Astrocyte of the cerebellum (primary cell): ENCODE measurements at regions of chr12 and their contacts with region 1.

Region 1: GRCh38 chr12:76444408-76444984 is 96.3 kb upstream of the BBS10 start:
- DNase-seq: no peak
- H3K4me3 ChIP-seq: no peak overlapping the region
- CTCF ChIP-seq: no peak

Region 2: DNA sequence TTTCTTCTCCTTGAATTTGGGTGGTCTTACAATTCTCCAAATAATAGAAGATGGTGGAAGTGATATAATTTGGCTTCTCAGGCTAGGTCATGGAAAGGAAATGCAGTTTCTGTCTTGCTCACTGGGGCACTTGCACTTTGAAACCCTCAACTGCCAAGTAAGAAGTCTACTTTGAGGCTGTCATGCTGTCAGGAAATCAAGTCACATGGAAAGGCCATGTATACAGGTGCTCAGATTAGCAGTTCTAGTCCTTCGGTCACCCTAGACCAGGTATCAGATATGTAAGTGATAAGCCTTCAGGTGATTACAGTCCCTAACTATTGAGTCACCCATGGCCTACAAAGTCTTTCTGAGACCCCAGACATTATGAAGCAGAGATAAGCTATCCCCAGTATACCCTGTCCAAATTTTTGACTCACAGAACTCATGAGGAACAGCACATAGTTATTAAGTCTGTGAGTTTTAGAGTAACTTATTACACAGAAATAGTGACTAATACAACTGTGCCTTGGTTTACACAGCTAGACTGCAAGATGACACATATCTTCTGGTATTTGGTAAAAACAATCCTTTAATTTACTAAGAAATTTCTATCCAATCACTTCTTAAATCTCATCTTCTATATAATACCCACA is 70.0 kb before region 1 on chr12:
- in situ Hi-C with region 1: loop called (anchors 5 kb)
- DNase-seq: no peak
- H3K4me3 ChIP-seq: no peak overlapping the region
- CTCF ChIP-seq: no peak

Region 3: DNA sequence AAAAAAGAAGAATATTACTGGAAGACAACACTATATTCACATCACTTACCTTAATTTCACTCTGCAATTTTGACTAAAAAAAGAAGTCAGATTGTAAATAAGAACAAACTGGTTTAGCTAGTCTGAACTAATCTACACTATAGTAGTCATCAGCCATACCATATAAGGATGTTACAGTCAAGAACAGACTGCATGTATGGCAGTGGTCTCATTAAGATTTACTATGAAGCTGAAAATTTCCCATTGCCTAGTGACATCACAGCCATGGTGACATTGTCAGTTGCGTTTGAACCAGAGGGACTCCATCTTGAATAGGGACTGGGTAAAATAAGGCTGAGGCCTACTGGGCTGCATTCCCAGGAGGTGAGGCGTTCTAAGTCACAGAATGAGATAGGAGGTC is 63.7 kb after region 1 on chr12:
- in situ Hi-C with region 1: no loop called
- DNase-seq: no peak
- H3K4me3 ChIP-seq: no peak overlapping the region
- CTCF ChIP-seq: no peak